ENCODE measurements at regions of chr7 and their contacts with region 1.

Region 1: GRCh38 chr7:75866489-75867389 is 12.1 kb upstream of the RHBDD2 start:
- DNase-seq: peak; percentile 76 to 85 (median 81)
- ATAC-seq: peak; percentile 96
- H3K4me3 ChIP-seq: no peak overlapping the region
- H3K27ac ChIP-seq: peak overlapping the region; percentile 11; the same call in 1 of the 3 replicates
- H3K4me1 ChIP-seq: peaks cover 8 to 16% of the 10 kb centered on the region in 2 experiments; a peak in 4 of 5 replicates
- H3K27me3 ChIP-seq: no peaks in the 10 kb centered on the region
- CTCF ChIP-seq: peak; percentile 96 to 99 (median 99)
- EP300 ChIP-seq: peak; percentile 57
- POLR2A ChIP-seq: no peak
- RAD21 ChIP-seq: peak; percentile 98 to 99

Region 2: GRCh38 chr7:75971961-75972763 is 105.4 kb after region 1 on chr7:
- CTCF ChIA-PET with region 1: no interaction called
- POLR2A ChIA-PET with region 1: no interaction called
- in situ Hi-C with region 1: no loop called
- intact Hi-C with region 1: loop called (anchors 5 kb)
- DNase-seq: peak in 2 of 4 experiments; percentile 36 to 53
- ATAC-seq: peak; percentile 72
- H3K4me3 ChIP-seq: no peak overlapping the region
- H3K27ac ChIP-seq: no peak overlapping the region
- H3K4me1 ChIP-seq: peaks cover 8 to 27% of the 10 kb centered on the region in 2 experiments; a peak in 3 of 5 replicates
- H3K27me3 ChIP-seq: no peaks in the 10 kb centered on the region
- CTCF ChIP-seq: peak in 2 of 3 experiments; percentile 22 to 45; a peak in 3 of 6 replicates
- EP300 ChIP-seq: no peak
- POLR2A ChIP-seq: no peak
- RAD21 ChIP-seq: no peak

Region 3: GRCh38 chr7:76020031-76020714 is 153.4 kb after region 1 on chr7:
- CTCF ChIA-PET with region 1: interaction called, 95 read pairs
- POLR2A ChIA-PET with region 1: interaction called, 4 read pairs
- in situ Hi-C with region 1: loop called (anchors 5 kb)
- intact Hi-C with region 1: loop called (anchors 1 kb)
- DNase-seq: peak; percentile 85 to 88 (median 86)
- ATAC-seq: peak; percentile 97
- H3K4me3 ChIP-seq: no peak overlapping the region
- H3K27ac ChIP-seq: no peak overlapping the region
- H3K4me1 ChIP-seq: peaks cover 0 to 4% of the 10 kb centered on the region in 2 experiments; a peak in 2 of 5 replicates
- H3K27me3 ChIP-seq: no peaks in the 10 kb centered on the region
- CTCF ChIP-seq: peak; percentile 91 to 99 (median 96)
- EP300 ChIP-seq: no peak
- POLR2A ChIP-seq: no peak
- RAD21 ChIP-seq: peak; percentile 96 to 98

Region 4: GRCh38 chr7:76129366-76129765 is 262.6 kb after region 1 on chr7:
- CTCF ChIA-PET with region 1: no interaction called
- POLR2A ChIA-PET with region 1: no interaction called
- in situ Hi-C with region 1: no loop called
- intact Hi-C with region 1: loop called (anchors 5 kb)
- DNase-seq: no peak
- ATAC-seq: no peak; the same call in 2 of the 3 replicates
- H3K4me3 ChIP-seq: no peak overlapping the region
- H3K27ac ChIP-seq: no peak overlapping the region
- H3K4me1 ChIP-seq: no peaks in the 10 kb centered on the region
- H3K27me3 ChIP-seq: peaks cover 0 to 5% of the 10 kb centered on the region in 2 experiments; a peak in 2 of 5 replicates
- CTCF ChIP-seq: no peak
- EP300 ChIP-seq: no peak
- POLR2A ChIP-seq: no peak
- RAD21 ChIP-seq: no peak